ENCODE measurements at regions of chr1 and their contacts with region 1.

Region 1: GRCh38 chr1:10278880-10279279 is 68.5 kb downstream of the KIF1B start:
- DNase-seq: no peak
- H3K4me3 ChIP-seq: no peak overlapping the region
- H3K27ac ChIP-seq: no peak overlapping the region
- H3K4me1 ChIP-seq: no peaks in the 10 kb centered on the region
- H3K27me3 ChIP-seq: no peaks in the 10 kb centered on the region
- CTCF ChIP-seq: no peak

Region 2: GRCh38 chr1:10338047-10338446 is 59.2 kb after region 1 on chr1:
- CTCF ChIA-PET with region 1: no interaction called
- dilution Hi-C with region 1: loop called (anchors 5 kb)
- in situ Hi-C with region 1: no loop called
- intact Hi-C with region 1: no loop called
- DNase-seq: no peak
- H3K4me3 ChIP-seq: no peak overlapping the region
- H3K27ac ChIP-seq: no peak overlapping the region
- H3K4me1 ChIP-seq: no peaks in the 10 kb centered on the region
- H3K27me3 ChIP-seq: no peaks in the 10 kb centered on the region
- CTCF ChIP-seq: peak; percentile 66 to 68